ENCODE measurements at regions of chr2 and their contacts with region 1.

Region 1: DNA sequence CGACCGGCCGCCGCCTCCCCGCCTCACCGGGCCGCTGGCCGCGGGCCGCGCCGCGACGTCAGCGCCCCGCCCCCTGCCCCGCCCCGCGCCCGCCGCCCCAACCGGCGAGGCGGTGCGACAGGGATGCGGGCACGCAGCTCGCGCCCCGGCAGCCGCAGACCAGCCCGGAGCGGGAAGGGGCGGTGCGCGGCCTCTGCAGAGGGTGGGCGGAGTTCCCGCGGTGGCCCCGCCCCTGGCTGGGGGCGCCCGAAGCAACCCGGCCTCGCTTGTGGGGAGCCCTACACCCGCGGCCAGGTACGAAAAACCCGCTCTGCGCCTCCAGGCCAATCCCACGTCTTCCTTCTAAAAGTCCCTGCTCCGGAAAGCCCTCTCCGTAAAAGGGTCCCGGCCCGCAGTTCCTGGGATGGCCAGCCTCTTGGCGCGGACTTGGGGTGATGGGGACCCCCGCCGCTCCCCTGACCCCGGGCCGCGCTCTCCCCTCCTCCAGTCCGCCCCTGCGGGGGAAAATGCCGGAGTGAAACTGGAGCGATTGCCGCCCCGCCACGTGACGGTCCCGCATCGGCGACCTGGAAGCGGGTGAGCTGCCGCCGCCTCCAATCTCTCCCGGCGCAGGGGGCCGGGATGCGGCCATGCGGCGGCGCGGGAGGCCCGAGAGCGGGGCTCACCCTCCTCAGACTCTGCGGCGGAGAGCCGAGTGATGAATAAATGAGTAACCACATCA is at the start of gene RAB11FIP5:
- DNase-seq: peak; percentile 50 to 89 (median 72)
- H3K4me3 ChIP-seq: peak within 1 kb of the TSS; percentile 71 to 96 (median 87)
- H3K27ac ChIP-seq: peak within 1 kb of the TSS in 58 of 59 donors; percentile 45 to 95 (median 84)
- H3K27me3 ChIP-seq: no peaks in the 10 kb centered on the region
- CTCF ChIP-seq: peak in 10 of 56 donors; percentile 8 to 42 (median 18)
- total RNA-seq, gene RAB11FIP5: 28.8 to 98.3 (median 66.8) TPM

Region 2: DNA sequence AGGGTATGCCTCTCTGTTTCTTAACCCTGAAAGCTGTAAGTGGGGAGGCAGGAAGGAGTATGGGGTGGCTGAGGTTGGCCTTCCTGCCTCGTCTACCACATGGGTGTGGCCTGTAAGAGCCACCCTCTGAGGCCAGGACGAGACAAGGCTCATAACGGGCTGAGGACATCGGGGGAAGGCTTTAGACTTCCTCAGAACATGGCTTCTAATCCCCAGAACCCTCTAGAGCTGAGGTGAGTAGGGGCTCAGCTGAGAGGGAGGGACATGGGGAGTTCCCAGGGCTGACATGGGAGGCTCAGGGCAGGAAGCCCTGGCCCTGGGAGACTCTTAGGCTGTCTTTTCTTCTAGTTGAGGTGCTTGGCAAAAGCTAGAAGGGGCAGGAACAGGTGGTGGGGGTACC is 159.1 kb before region 1 on chr2:
- intact Hi-C with region 1: no loop called
- DNase-seq: no peak
- H3K4me3 ChIP-seq: no peak overlapping the region
- H3K27ac ChIP-seq: no peak overlapping the region
- H3K27me3 ChIP-seq: no peaks in the 10 kb centered on the region
- CTCF ChIP-seq: no peak

Region 3: GRCh38 chr2:73071360-73072133 is 41.5 kb before region 1 on chr2 and contains the start of gene SFXN5:
- intact Hi-C with region 1: loop called (anchors 1 to 5 kb)
- DNase-seq: peak; percentile 95 to 99 (median 98)
- H3K4me3 ChIP-seq: peak within 1 kb of the TSS; percentile 69 to 100 (median 93)
- H3K27ac ChIP-seq: peak within 1 kb of the TSS; percentile 72 to 99 (median 97)
- H3K27me3 ChIP-seq: no peaks in the 10 kb centered on the region
- CTCF ChIP-seq: peak in 34 of 56 donors; percentile 6 to 61 (median 33)
- total RNA-seq, gene SFXN5: 82.7 to 370 (median 148) TPM